ENCODE measurements at regions of chr7 and their contacts with region 1.

Region 1: DNA sequence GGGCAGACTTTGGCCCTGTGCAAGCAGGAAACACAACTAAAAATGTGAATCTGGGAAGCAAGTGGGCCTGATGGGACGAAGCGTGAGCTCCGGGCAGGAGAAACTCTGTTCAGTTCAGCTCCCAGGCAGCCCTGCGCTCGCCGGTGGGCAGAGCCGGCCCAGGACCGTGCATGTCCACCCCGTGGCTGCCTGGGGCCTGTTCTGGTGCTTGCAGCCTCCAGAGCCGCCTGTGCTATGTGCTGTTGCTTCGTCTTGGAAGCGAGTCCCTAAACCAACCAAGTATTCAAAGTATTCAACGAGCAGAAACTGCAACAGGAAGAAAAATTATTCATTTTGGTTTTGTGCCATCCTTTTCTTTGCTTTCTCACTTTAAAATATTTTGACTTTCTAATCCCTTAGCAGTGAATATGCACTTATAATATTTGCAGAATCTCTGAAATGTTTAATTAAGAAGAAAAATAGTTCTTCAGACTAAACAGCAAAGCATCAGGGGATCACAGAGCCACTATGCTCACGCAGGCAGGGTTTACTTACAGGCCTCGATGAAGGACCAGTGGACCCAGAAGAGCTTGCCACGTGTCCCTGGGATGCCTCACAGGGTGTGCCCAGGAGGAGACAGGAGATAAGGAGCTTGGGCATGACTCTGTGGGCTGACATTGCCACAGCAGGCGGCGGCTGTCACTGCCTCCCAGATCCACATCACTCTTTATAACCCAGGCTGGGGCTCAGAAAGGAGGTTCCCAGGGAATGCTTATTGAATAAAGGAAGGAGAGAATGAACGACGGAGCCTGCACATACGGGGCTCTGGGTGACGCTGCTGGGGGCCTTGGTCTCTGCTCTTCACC is 45.6 kb downstream of the VIPR2 start:
- DNase-seq: peak; percentile 82 to 87
- ATAC-seq: peak; percentile 73
- H3K4me3 ChIP-seq: no peak overlapping the region
- H3K27ac ChIP-seq: peak overlapping the region; percentile 98 to 99
- H3K4me1 ChIP-seq: peaks cover 0 to 2% of the 10 kb centered on the region in 2 donors
- H3K27me3 ChIP-seq: no peaks in the 10 kb centered on the region

Region 2: DNA sequence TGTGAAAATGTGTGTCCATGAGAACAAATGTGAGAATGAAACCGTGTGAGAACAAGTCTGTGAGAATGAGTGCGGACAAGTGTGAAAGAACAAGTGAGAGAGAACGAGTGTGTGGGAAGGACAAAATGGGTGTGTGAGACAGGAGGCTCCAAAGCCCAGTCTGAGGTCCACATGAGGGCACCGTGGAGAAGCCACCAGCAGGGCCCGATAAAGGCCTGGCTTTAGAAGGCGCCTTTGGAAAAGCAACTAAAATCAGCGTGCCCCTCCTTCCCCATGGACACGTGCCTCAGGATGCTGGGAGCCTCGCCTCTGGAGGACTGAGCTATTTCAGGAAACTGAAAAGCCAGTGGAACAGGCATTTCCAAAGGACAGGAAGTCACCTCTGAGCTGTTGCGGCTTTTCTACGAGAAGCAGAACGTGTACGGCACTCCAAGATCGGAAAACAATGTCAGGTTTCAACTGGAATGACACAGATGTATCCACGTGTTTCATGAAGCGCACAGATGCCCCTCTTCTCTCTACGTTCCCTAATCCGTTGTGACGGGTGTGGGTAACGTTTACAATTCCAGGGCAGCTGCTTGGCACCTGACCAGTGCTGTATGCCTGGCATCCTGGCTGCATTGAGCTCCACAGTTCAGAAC is 316.2 kb before region 1 on chr7:
- intact Hi-C with region 1: loop called (anchors 10 kb)
- DNase-seq: peak; percentile 85 to 89
- ATAC-seq: peak; percentile 91
- H3K4me3 ChIP-seq: no peak overlapping the region
- H3K27ac ChIP-seq: peak overlapping the region; percentile 63 to 93
- H3K4me1 ChIP-seq: peaks cover 0 to 5% of the 10 kb centered on the region in 2 donors
- H3K27me3 ChIP-seq: no peaks in the 10 kb centered on the region

Region 3: DNA sequence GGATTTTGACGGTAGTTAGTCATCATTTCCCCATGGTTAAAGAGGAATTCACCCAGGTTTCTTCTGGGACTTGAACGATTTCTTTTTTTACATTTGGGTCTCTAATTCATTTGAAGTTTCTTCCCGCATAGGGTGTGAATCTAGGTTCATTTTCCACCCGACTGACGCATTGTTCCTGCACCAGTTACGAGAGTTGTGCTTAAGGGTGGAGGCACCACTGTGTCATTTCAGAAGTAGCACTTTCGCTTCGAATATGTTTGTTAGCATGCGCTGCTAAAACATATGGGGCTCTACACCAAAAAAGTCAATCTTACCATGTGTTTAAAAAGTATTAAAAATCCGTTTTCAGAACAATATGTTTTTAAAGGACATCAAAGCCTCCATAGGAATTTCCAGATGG is 94.6 kb before region 1 on chr7:
- intact Hi-C with region 1: no loop called
- DNase-seq: no peak
- ATAC-seq: no peak
- H3K4me3 ChIP-seq: no peak overlapping the region
- H3K27ac ChIP-seq: no peak overlapping the region
- H3K4me1 ChIP-seq: no peaks in the 10 kb centered on the region
- H3K27me3 ChIP-seq: no peaks in the 10 kb centered on the region

Region 4: DNA sequence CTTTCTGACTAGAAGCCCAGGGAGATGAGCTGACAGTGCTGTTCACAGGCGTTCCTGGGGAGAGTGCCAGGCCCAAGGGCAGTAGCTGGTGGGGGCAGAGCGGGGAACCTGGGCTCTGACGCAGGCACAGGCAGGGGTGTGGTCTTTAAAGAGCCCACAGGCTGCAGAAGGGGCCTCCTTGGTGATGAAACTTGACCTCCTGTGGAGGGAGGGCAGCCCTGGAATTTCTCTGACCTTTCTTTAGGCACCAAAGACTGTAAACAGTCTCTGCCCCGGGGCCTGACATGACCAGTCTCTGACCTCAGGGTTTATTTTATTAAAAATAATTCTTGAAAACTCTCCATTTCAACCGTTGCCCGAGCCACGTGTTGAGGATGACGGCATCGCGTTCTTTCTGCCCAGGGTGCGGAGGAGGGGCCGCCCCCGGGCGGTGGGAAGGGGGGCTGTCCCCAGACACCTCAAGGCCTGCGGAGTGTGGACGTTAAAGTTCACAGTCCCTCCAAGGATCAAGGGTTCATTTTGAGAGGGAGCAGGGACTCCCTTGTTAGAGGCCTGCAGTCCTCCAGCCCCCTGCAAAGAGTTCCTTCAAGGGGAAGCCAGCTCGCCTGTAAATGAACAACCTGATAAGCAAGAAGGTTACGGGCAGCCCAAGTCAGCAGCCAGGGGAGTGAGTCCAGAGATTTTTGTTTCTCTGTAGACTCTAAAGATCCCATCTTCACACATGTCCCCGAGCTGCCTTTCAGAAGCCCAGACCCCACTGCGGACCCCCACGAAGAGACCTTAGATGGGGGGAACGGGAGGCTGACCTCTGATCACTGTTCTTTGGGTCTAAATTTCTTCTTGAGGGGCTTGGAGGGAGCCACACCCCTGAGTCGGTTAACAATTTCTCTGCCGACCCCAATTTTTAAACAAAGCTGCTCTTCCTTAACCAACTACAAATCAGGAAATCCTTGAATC is 83.3 kb before region 1 on chr7:
- intact Hi-C with region 1: loop called (anchors 2 to 5 kb)
- DNase-seq: peak; percentile 80 to 90
- ATAC-seq: peak; percentile 85
- H3K4me3 ChIP-seq: no peak overlapping the region
- H3K27ac ChIP-seq: peak overlapping the region; percentile 64 to 97
- H3K4me1 ChIP-seq: peaks cover 4 to 5% of the 10 kb centered on the region in 2 donors
- H3K27me3 ChIP-seq: no peaks in the 10 kb centered on the region

Region 5: DNA sequence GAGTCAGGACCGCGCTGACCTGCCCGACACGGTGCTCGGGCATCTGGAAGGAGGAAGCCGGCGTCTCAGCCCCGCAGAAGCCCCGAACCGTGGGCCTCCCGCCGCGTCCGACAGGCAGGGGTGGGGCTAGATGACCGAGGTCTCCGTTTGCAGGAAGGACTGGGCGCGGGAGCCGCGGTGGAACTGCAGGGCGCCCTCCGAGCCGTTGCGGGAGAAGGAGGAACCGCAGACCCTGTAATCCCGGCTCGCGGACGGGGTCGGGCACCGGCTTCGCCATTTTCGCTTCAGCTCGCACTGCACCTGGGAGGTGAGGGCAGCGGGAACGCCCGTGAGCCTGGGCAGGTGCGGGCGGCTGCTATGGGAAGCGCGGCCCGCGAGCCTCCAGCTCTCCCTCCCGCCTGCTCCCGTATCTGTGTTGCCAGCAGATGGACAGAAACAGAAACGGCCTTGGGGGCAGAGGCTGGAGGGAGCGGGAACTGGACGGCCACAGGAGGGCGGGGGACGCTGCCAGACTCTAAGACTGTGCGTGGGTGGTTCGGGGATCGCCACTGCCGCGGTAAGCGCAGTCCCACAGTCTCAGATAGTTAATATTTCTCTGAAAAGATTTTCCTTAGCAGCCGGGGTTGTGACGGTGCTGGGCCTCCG is 68.4 kb before region 1 on chr7:
- intact Hi-C with region 1: loop called in 1 of 2 experiments (anchors 5 kb)
- DNase-seq: peak; percentile 75 to 89
- ATAC-seq: peak; percentile 76
- H3K4me3 ChIP-seq: peak overlapping the region; percentile 1 to 28
- H3K27ac ChIP-seq: peak overlapping the region; percentile 18 to 79
- H3K4me1 ChIP-seq: no peaks in the 10 kb centered on the region
- H3K27me3 ChIP-seq: no peaks in the 10 kb centered on the region

Region 6: DNA sequence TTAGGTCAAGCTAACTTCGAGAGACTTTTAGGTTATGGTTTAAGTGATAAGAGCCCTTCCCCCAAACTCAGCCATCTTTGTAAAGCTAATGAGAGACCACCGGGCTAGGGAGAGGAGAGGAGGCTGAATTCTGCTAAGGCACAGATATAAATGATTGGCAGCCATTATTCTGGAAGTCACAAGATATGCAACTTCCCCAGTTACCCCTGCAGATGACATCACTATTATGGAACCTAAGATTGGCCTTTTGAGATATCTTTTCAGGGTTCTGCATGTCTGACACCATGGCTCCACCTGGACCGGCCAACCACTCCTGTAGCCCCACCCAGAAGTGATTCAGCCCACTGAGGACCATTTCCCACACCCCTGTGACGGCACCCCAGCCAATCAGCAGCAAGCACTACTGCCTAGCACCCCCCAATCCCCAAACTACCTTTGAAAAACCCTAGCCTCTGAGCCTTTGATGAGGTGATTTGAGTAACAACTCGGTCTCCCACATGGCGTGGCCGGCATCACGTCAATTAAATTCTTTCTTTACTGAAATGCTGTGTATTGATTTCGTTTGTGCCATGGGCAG is 31.3 kb after region 1 on chr7:
- intact Hi-C with region 1: no loop called
- DNase-seq: peak in 1 of 2 donors; percentile 37
- ATAC-seq: no peak
- H3K4me3 ChIP-seq: no peak overlapping the region
- H3K27ac ChIP-seq: no peak overlapping the region
- H3K4me1 ChIP-seq: no peaks in the 10 kb centered on the region
- H3K27me3 ChIP-seq: no peaks in the 10 kb centered on the region

Region 7: GRCh38 chr7:159143780-159144757 is 45.0 kb after region 1 on chr7:
- intact Hi-C with region 1: loop called (anchors 5 kb)
- DNase-seq: peak in 1 of 2 donors; percentile 86
- ATAC-seq: peak; percentile 60
- H3K4me3 ChIP-seq: peak overlapping the region; percentile 77 to 92
- H3K27ac ChIP-seq: no peak overlapping the region
- H3K4me1 ChIP-seq: no peaks in the 10 kb centered on the region
- H3K27me3 ChIP-seq: no peaks in the 10 kb centered on the region